AG04449 (cell line): ENCODE measurements at regions of chr7 and their contacts with region 1.

Region 1: DNA sequence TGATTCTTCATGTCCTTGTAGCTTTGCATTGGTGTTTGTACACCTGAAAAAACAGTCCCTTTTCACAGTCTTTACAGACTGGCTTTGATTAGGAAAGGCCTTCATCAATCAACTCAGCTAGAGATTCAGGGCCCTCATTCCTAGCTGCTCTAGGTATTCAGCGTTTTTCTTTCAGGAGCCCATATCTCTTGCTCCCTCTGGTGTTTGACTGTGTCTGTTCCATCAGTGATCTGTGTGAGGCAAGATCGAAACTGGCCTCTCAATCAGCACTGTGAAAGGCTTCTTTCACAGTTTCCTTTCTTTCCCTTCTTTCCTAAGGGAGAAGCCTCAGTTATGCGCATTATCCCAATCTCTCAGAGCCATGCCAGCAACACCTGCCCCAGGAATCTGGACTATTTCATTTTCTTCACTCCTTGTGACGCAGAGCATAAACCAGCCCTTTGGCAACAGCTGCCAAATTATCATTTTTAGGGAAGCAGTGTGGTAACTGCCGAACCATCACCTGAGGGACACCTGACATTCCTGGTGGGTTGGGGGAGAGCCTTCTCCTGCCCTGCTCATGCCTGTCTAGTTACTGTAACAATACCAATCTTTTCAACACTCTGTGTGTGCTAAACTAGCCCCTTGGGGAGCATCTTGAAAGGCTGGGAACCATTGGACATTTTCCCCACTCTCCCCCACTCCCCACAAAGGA is 75.7 kb upstream of the CCDC71L start:
- DNase-seq: peak; percentile 14
- H3K4me3 ChIP-seq: no peak overlapping the region
- CTCF ChIP-seq: peak; percentile 67

Region 2: GRCh38 chr7:106050011-106050745 is 686.5 kb before region 1 on chr7:
- CTCF ChIA-PET with region 1: no interaction called
- POLR2A ChIA-PET with region 1: no interaction called
- DNase-seq: no peak
- H3K4me3 ChIP-seq: no peak overlapping the region
- CTCF ChIP-seq: peak; percentile 45

Region 3: GRCh38 chr7:106461993-106462859 is 274.4 kb before region 1 on chr7:
- CTCF ChIA-PET with region 1: interaction called, 14 read pairs
- POLR2A ChIA-PET with region 1: no interaction called
- DNase-seq: no peak
- H3K4me3 ChIP-seq: no peak overlapping the region
- CTCF ChIP-seq: peak; percentile 7

Region 4: DNA sequence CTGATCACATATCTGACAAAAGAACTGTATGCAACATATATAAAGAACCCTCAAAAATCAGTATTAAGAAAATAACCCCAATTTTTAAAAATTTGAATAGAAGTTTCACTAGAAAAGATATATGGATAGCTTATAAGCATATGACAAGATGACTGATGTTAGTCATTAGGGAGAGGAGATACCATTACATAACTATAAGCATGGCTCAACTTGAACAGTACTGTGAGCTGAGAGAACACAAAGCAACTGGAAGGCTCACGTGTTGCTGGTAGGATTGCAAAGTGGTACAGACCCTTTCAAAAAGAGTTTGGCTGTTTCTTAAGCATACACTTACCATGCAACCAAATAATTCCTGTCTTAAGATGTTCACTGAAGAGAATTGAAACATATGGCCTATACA is 90.4 kb before region 1 on chr7:
- CTCF ChIA-PET with region 1: no interaction called
- POLR2A ChIA-PET with region 1: no interaction called
- DNase-seq: no peak
- H3K4me3 ChIP-seq: no peak overlapping the region
- CTCF ChIP-seq: no peak

Region 5: GRCh38 chr7:106659963-106660861 is 76.4 kb before region 1 on chr7:
- CTCF ChIA-PET with region 1: interaction called, 89 read pairs
- POLR2A ChIA-PET with region 1: interaction called, 3 read pairs
- DNase-seq: no peak
- H3K4me3 ChIP-seq: peak overlapping the region; percentile 83
- CTCF ChIP-seq: peak; percentile 82

Region 6: DNA sequence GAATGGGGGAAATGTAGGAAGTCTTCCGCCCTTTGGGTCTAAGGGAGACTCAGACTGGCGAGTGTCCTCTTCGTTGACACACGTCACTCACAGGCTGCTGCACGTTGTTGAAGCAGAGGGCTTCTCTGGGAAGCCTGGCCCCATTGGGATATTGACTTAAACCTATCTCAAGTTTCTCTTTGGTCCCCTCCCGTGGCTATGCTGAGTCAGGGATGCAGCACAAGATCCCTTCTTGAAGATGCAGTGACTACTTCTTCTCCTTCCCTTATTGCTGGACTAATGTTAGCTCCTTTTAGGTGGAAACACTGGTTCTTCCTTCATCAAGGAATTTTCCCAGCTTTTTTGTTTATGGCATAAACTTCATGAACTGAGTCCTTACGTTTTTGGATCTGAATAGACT is 14.1 kb after region 1 on chr7:
- CTCF ChIA-PET with region 1: interaction called, 21 read pairs
- POLR2A ChIA-PET with region 1: no interaction called
- DNase-seq: no peak
- H3K4me3 ChIP-seq: no peak overlapping the region
- CTCF ChIP-seq: no peak

Region 7: DNA sequence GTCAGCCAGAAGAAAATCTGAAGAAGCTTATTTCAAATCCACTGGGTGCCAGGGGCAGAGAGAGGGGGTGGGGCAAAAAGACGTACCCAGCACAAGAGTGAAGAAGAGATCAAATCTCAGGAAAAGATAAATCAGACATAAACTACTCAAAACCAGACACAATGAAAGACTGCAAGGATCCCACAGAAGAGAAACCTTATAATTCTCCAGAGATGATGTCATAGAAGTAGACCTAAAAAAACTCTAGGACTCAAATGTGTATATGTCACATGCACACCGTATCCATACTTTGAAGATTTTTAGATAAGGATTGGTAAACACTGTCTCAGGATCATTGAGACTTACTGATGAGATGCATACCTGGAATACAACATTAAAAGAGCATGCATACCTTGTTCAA is 29.9 kb after region 1 on chr7:
- CTCF ChIA-PET with region 1: interaction called, 11 read pairs
- POLR2A ChIA-PET with region 1: no interaction called
- DNase-seq: no peak
- H3K4me3 ChIP-seq: no peak overlapping the region
- CTCF ChIP-seq: no peak